ENCODE measurements at regions of chr14 and their contacts with region 1.

Region 1: GRCh38 chr14:61703342-61704129 is 8.2 kb downstream of the HIF1A start:
- DNase-seq: no peak
- H3K4me3 Mint-ChIP-seq: peak overlapping the region; percentile 57
- H3K27ac Mint-ChIP-seq: peak overlapping the region; percentile 79
- H3K4me1 Mint-ChIP-seq: peaks cover 86% of the 10 kb centered on the region
- H3K27me3 Mint-ChIP-seq: no peaks in the 10 kb centered on the region

Region 2: GRCh38 chr14:61671082-61671481 is 32.5 kb before region 1 on chr14:
- CTCF ChIA-PET with region 1: no interaction called
- POLR2A ChIA-PET with region 1: no interaction called
- intact Hi-C with region 1: no loop called
- DNase-seq: peak; percentile 65
- H3K4me3 Mint-ChIP-seq: no peak overlapping the region
- H3K27ac Mint-ChIP-seq: no peak overlapping the region
- H3K4me1 Mint-ChIP-seq: peaks cover 15% of the 10 kb centered on the region
- H3K27me3 Mint-ChIP-seq: no peaks in the 10 kb centered on the region

Region 3: GRCh38 chr14:61719344-61720293 is 16.1 kb after region 1 on chr14:
- CTCF ChIA-PET with region 1: no interaction called
- POLR2A ChIA-PET with region 1: interaction called, 8 read pairs
- intact Hi-C with region 1: loop called (anchors 2 kb)
- DNase-seq: no peak
- H3K4me3 Mint-ChIP-seq: peak overlapping the region; percentile 23
- H3K27ac Mint-ChIP-seq: peak overlapping the region; percentile 68
- H3K4me1 Mint-ChIP-seq: peaks cover 72% of the 10 kb centered on the region
- H3K27me3 Mint-ChIP-seq: no peaks in the 10 kb centered on the region

Region 4: DNA sequence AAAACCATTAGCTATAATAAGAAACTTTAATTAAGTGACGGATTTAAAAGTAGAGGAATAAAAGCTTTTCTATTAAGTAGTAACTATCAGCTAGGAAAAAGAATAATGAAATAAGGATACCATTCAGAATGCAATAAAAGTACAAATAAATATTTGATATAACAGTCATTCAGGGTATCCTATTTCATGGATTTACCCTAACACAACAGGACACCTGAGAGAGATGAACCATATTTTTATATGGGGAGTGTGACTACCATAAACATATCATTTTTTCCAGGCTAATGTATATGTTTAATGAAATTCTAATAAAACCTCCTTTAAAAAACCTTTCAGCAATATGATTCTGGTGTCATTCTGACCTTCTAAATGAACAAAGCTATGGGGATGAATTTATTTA is 452.5 kb after region 1 on chr14:
- CTCF ChIA-PET with region 1: no interaction called
- POLR2A ChIA-PET with region 1: no interaction called
- intact Hi-C with region 1: no loop called
- DNase-seq: no peak
- H3K4me3 Mint-ChIP-seq: no peak overlapping the region
- H3K27ac Mint-ChIP-seq: no peak overlapping the region
- H3K4me1 Mint-ChIP-seq: no peaks in the 10 kb centered on the region
- H3K27me3 Mint-ChIP-seq: peaks cover 8% of the 10 kb centered on the region